ENCODE measurements at regions of chr7 and their contacts with region 1.

Region 1: DNA sequence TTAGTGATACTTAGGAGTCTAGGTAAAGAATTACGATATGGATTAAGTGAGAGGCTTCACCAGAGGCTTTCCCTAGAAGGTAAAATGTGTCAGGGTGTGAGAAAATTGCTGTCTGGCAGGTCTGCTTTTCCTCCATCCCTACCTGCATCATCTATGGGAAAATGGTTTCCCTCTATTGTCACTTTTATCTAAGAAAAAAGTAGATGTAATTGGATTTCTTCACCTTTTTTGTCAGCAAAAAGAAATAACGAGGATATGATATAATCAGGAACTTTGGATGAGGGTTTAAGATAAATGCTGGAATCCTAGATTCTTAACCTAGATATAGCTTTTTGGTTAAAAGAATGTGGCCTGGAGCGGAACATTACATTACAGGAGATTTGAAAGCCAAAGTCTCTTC is 146.1 kb downstream of the MAGI2 start:
- DNase-seq: no peak
- H3K4me3 ChIP-seq: no peak overlapping the region
- H3K27ac ChIP-seq: no peak overlapping the region
- H3K4me1 ChIP-seq: no peaks in the 10 kb centered on the region
- H3K27me3 ChIP-seq: no peaks in the 10 kb centered on the region
- CTCF ChIP-seq: no peak
- EP300 ChIP-seq: no peak
- POLR2A ChIP-seq: no peak

Region 2: GRCh38 chr7:79341902-79342301 is 34.5 kb after region 1 on chr7:
- in situ Hi-C with region 1: no loop called
- intact Hi-C with region 1: loop called (anchors 1 kb)
- DNase-seq: no peak
- H3K4me3 ChIP-seq: no peak overlapping the region
- H3K27ac ChIP-seq: no peak overlapping the region
- H3K4me1 ChIP-seq: no peaks in the 10 kb centered on the region
- H3K27me3 ChIP-seq: no peaks in the 10 kb centered on the region
- CTCF ChIP-seq: no peak
- EP300 ChIP-seq: no peak
- POLR2A ChIP-seq: no peak

Measured in transverse colon (tissue), 4 donors.